CD8-positive, alpha-beta T cell (primary cell): ENCODE measurements at regions of chr17 and their contacts with region 1.

Region 1: DNA sequence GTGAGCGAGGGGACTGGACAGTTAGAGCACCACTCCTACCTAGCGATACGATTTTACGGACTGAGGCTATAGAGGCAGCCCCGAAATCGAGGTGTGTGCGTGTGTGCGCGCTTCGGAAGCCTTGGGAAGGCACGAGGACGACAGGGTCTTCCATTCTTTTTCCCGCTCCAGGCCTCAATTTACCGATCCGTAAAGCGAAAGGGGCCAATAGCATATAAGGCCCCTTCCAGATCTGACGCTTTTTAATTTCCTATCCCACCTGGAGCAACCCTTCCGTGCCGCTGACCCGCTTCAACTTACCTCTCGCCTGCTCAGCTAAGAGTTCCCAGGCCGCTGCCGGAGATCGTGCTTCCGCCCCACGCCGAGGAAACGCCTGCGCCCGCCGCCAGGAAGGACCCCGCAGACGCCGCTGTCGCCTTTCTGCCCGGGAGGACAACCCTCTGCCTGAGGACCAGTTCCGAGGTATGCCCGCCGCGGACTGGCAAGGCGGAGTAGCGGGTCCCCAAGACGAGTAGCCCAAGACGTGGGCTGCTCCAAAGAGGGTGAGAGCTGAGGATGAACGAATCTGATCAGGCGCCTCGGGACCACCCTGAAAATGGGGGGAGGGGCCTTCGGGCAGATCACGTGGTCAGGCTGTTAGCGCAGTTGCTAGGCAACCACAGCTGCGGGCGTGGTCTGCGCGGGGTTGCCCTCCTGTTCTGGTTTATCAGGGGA is at the start of gene EFTUD2:
- DNase-seq: peak; percentile 88 to 98 (median 93)
- ATAC-seq: peak; percentile 95
- H3K4me3 ChIP-seq: peak within 1 kb of the TSS; percentile 71 to 84
- H3K4me3 Mint-ChIP-seq: peak within 1 kb of the TSS; percentile 97
- H3K27ac ChIP-seq: peak within 1 kb of the TSS; percentile 96 to 98
- H3K27ac Mint-ChIP-seq: peak within 1 kb of the TSS; percentile 100
- H3K4me1 ChIP-seq: peaks cover 18% of the 10 kb centered on the region
- H3K4me1 Mint-ChIP-seq: peaks cover 29% of the 10 kb centered on the region
- H3K27me3 ChIP-seq: no peaks in the 10 kb centered on the region
- H3K27me3 Mint-ChIP-seq: no peaks in the 10 kb centered on the region
- CTCF ChIP-seq: no peak
- total RNA-seq, gene EFTUD2: 131 to 133 TPM

Region 2: DNA sequence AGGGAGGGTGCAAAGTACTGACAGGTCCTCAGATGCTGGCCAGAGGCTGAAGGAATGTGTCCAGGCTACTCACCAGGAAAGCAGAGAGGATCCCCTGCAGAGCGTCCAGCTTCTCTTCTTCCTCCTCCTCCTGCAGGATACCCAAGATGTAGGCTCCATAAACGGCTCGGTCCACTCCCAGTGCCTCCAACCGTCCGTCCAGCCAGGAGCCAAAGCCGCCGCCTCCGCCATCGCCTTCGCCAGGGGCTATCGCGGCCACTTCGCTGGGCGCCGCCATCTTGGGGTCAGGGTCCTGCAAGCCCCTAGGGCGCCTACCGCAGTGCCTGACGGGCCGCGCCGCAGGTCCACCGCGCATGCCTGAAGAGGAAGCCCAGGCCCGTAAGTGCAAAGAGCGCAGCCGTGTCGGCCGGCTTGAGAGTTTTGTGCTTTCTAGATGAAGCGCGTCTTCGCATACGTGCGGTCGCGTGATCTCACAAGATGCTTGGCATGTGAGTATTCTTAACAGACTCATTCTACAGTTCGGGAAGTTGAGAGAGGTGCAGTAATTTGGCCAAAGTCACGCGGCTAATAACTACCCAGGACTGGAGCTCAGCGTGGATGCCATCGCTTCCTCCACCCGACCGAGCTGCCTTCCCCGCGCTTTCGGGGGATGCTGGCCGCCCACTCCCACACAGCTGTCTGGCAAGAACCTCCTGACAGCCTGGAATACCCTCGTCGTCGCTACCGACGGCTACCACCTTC is 209.6 kb before region 1 on chr17 and contains the start of gene CCDC43:
- CTCF ChIA-PET with region 1: no interaction called
- POLR2A ChIA-PET with region 1: interaction called, 4 read pairs
- intact Hi-C with region 1: loop called (anchors 1 kb)
- DNase-seq: peak; percentile 86 to 95 (median 92)
- ATAC-seq: peak; percentile 99
- H3K4me3 ChIP-seq: peak within 1 kb of the TSS; percentile 71 to 86
- H3K4me3 Mint-ChIP-seq: peak within 1 kb of the TSS; percentile 98
- H3K27ac ChIP-seq: peak within 1 kb of the TSS; percentile 81 to 90
- H3K27ac Mint-ChIP-seq: peak within 1 kb of the TSS; percentile 96
- H3K4me1 ChIP-seq: peaks cover 16% of the 10 kb centered on the region
- H3K4me1 Mint-ChIP-seq: peaks cover 38% of the 10 kb centered on the region
- H3K27me3 ChIP-seq: no peaks in the 10 kb centered on the region
- H3K27me3 Mint-ChIP-seq: no peaks in the 10 kb centered on the region
- CTCF ChIP-seq: no peak
- total RNA-seq, gene CCDC43: 39.1 TPM

Region 3: GRCh38 chr17:44947461-44948314 is 48.5 kb after region 1 on chr17 and contains the start of gene KIF18B:
- CTCF ChIA-PET with region 1: no interaction called
- POLR2A ChIA-PET with region 1: no interaction called
- intact Hi-C with region 1: loop called (anchors 1 kb)
- DNase-seq: peak; percentile 72 to 94 (median 87)
- ATAC-seq: peak; percentile 97
- H3K4me3 ChIP-seq: peak within 1 kb of the TSS; percentile 57 to 68
- H3K4me3 Mint-ChIP-seq: peak within 1 kb of the TSS; percentile 93
- H3K27ac ChIP-seq: peak within 1 kb of the TSS; percentile 47 to 67
- H3K27ac Mint-ChIP-seq: peak within 1 kb of the TSS; percentile 93
- H3K4me1 ChIP-seq: peaks cover 9% of the 10 kb centered on the region
- H3K4me1 Mint-ChIP-seq: peaks cover 13% of the 10 kb centered on the region
- H3K27me3 ChIP-seq: peaks cover 0 to 5% of the 10 kb centered on the region in 2 experiments
- H3K27me3 Mint-ChIP-seq: peaks cover 5% of the 10 kb centered on the region
- CTCF ChIP-seq: no peak
- total RNA-seq, gene KIF18B: 0.11 TPM in 1 of 2 experiments, not detected in the other

Region 4: GRCh38 chr17:44968226-44969143 is 69.3 kb after region 1 on chr17 and contains the start of gene C1QL1:
- CTCF ChIA-PET with region 1: no interaction called
- POLR2A ChIA-PET with region 1: interaction called, 3 read pairs
- intact Hi-C with region 1: loop called in 1 of 2 experiments (anchors 5 kb)
- DNase-seq: peak; percentile 67 to 91 (median 82)
- ATAC-seq: peak; percentile 93
- H3K4me3 ChIP-seq: peak within 1 kb of the TSS; percentile 41 to 55
- H3K4me3 Mint-ChIP-seq: peak within 1 kb of the TSS; percentile 76
- H3K27ac ChIP-seq: no peak within 1 kb of the TSS
- H3K27ac Mint-ChIP-seq: no peak within 1 kb of the TSS
- H3K4me1 ChIP-seq: peaks cover 29% of the 10 kb centered on the region
- H3K4me1 Mint-ChIP-seq: peaks cover 36% of the 10 kb centered on the region
- H3K27me3 ChIP-seq: peaks cover 39 to 41% of the 10 kb centered on the region in 2 experiments
- H3K27me3 Mint-ChIP-seq: peaks cover 55% of the 10 kb centered on the region
- CTCF ChIP-seq: no peak
- total RNA-seq, gene C1QL1: not detected

Region 5: GRCh38 chr17:45051060-45051719 is 152.0 kb after region 1 on chr17 and contains the start of gene DCAKD:
- CTCF ChIA-PET with region 1: no interaction called
- POLR2A ChIA-PET with region 1: interaction called, 6 read pairs
- intact Hi-C with region 1: loop called in 1 of 2 experiments (anchors 1 kb)
- DNase-seq: peak; percentile 76 to 97 (median 85)
- ATAC-seq: peak; percentile 90
- H3K4me3 ChIP-seq: peak within 1 kb of the TSS; percentile 61 to 82
- H3K4me3 Mint-ChIP-seq: peak within 1 kb of the TSS; percentile 86
- H3K27ac ChIP-seq: peak within 1 kb of the TSS; percentile 78 to 95
- H3K27ac Mint-ChIP-seq: peak within 1 kb of the TSS; percentile 94
- H3K4me1 ChIP-seq: peaks cover 29% of the 10 kb centered on the region
- H3K4me1 Mint-ChIP-seq: peaks cover 36% of the 10 kb centered on the region
- H3K27me3 ChIP-seq: no peaks in the 10 kb centered on the region
- H3K27me3 Mint-ChIP-seq: no peaks in the 10 kb centered on the region
- CTCF ChIP-seq: no peak
- total RNA-seq, gene DCAKD: 8.3 to 8.4 TPM

Region 6: DNA sequence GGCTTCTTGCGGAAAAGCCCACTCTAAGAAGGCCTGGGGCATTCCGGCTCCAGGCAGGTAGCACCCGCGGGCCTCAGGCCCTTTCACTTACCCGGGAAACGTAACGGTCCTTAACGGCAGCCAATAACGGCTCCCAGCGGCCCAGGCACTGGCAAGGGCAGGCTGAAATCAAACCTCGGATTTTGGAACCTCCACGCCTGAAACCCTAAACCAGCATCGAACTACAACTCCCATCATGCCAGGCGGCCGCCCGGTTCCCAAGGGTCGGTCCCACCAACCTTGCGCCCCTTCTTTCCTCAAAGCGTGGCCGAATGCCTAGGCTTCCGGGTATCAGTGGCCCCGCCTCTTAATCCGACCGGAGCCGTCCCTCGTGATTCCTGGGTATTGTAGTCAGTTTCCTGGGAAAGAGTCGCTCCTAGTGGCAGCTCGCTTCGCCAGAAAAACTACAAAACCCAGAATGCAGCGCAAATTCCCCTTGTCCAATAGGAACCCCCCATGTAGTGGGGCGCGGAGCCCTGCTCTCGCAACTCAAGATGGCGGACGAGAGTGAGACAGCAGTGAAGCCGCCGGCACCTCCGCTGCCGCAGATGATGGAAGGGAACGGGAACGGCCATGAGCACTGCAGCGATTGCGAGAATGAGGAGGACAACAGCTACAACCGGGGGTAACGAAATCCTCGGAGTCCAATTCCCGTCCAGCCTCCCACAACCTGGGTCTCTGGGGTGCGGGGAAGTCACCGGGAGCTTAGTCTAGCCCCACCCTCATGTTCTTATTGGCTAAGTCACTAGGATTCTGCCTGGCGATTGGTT is 161.8 kb after region 1 on chr17 and contains the start of gene NMT1:
- CTCF ChIA-PET with region 1: no interaction called
- POLR2A ChIA-PET with region 1: interaction called, 7 read pairs
- intact Hi-C with region 1: loop called (anchors 1 kb)
- DNase-seq: peak; percentile 88 to 99 (median 94)
- ATAC-seq: peak; percentile 90
- H3K4me3 ChIP-seq: peak within 1 kb of the TSS; percentile 84 to 88
- H3K4me3 Mint-ChIP-seq: peak within 1 kb of the TSS; percentile 97
- H3K27ac ChIP-seq: peak within 1 kb of the TSS; percentile 81 to 91
- H3K27ac Mint-ChIP-seq: peak within 1 kb of the TSS; percentile 99
- H3K4me1 ChIP-seq: peaks cover 32% of the 10 kb centered on the region
- H3K4me1 Mint-ChIP-seq: peaks cover 43% of the 10 kb centered on the region
- H3K27me3 ChIP-seq: no peaks in the 10 kb centered on the region
- H3K27me3 Mint-ChIP-seq: no peaks in the 10 kb centered on the region
- CTCF ChIP-seq: no peak
- total RNA-seq, gene NMT1: 62.6 to 66.6 TPM